Activated T-helper 1 cell treated with anti-CD3 and anti-CD28 coated beads, Interleukin-12 subunit alpha, Interleukin-12 subunit beta, Interleukin-2, Interleukin-4 antibody, amounts not matched to agents 30 ng/mL and 10 ng/mL and 1 ng/mL, durations not matched to agents 14 hours and 24 hours and 36 hours (primary cell): ENCODE measurements at regions of chr12 and their contacts with region 1.

Region 1: DNA sequence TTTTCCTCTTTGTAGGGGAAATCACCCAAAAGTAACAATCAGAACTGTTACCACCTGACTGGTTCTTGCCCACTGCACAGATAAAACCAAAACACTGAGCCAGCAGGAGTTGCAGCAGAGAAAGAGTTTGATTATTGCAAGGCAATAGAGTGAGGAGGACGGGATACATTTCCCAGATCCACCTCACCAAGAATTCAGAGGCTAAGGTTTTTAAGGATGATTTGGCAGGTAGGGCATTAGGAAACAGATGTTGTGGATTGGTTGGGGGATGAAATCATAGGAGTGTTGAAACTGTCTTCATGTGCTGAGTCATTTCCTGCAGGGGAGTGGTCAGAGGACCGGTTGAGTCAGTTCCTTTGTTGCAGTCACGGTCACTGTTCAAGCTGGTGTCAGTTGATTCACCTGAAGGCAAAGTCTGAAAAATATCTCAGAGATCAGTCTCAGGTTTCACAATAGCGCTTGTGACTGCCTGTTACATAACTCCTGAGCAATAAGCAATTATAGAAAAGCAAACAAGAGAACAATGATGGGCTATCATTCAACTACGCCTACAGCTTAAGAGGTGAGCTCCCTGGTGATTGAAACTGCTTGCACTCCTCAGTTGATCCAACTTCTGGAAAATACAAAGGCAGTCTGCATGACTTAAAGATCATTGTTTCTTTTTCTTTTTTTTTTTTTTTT is 20.3 kb upstream of the AMN1 start:
- DNase-seq: peak; percentile 71
- H3K4me3 Mint-ChIP-seq: no peak overlapping the region
- H3K27ac Mint-ChIP-seq: peak overlapping the region; percentile 27
- H3K4me1 Mint-ChIP-seq: peaks cover 53% of the 10 kb centered on the region
- H3K27me3 Mint-ChIP-seq: no peaks in the 10 kb centered on the region

Region 2: GRCh38 chr12:31317471-31318395 is 431.4 kb before region 1 on chr12:
- intact Hi-C with region 1: loop called (anchors 2 kb)
- DNase-seq: no peak
- H3K4me3 Mint-ChIP-seq: peak overlapping the region; percentile 97
- H3K27ac Mint-ChIP-seq: peak overlapping the region; percentile 90
- H3K4me1 Mint-ChIP-seq: peaks cover 84% of the 10 kb centered on the region
- H3K27me3 Mint-ChIP-seq: no peaks in the 10 kb centered on the region

Region 3: GRCh38 chr12:31589904-31590641 is 159.1 kb before region 1 on chr12:
- intact Hi-C with region 1: no loop called
- DNase-seq: no peak
- H3K4me3 Mint-ChIP-seq: peak overlapping the region; percentile 73
- H3K27ac Mint-ChIP-seq: peak overlapping the region; percentile 29
- H3K4me1 Mint-ChIP-seq: peaks cover 13% of the 10 kb centered on the region
- H3K27me3 Mint-ChIP-seq: peaks cover 54% of the 10 kb centered on the region

Region 4: GRCh38 chr12:31682136-31682962 is 66.8 kb before region 1 on chr12:
- intact Hi-C with region 1: loop called (anchors 2 kb)
- DNase-seq: peak; percentile 62
- H3K4me3 Mint-ChIP-seq: no peak overlapping the region
- H3K27ac Mint-ChIP-seq: peak overlapping the region; percentile 50
- H3K4me1 Mint-ChIP-seq: peaks cover 12% of the 10 kb centered on the region
- H3K27me3 Mint-ChIP-seq: no peaks in the 10 kb centered on the region

Region 5: DNA sequence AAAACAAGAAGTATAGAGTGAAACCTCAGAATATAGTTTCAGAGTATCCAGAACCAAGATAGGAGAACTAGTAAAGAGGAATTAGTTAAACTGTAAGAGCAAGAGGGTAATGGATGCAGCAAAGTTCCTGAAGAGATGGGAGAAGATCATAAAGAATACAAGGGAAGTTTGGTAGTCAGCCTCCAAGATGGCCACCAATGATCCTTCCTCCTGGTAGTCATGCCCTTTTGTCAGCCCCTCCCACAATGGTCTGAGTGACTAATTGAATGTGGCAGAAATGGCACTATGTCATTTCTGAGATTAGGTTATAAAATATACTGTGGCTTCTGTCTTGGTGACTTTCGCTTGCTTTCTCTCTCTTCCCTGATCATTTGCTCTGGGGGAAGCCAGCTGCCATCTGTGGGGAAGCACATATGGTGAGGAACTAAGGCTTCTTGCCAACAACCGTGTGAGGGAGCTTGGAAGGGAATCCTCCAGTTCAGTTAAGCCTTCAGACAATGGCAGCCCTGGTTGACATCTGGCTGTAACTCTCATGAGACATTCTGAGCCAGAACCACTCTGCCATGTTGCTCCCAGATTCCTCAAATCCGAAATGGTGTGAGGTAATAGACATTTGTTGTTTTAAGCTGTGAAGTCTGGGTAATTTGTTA is 35.0 kb after region 1 on chr12:
- intact Hi-C with region 1: no loop called
- DNase-seq: no peak
- H3K4me3 Mint-ChIP-seq: no peak overlapping the region
- H3K27ac Mint-ChIP-seq: no peak overlapping the region
- H3K4me1 Mint-ChIP-seq: no peaks in the 10 kb centered on the region
- H3K27me3 Mint-ChIP-seq: no peaks in the 10 kb centered on the region

Region 6: DNA sequence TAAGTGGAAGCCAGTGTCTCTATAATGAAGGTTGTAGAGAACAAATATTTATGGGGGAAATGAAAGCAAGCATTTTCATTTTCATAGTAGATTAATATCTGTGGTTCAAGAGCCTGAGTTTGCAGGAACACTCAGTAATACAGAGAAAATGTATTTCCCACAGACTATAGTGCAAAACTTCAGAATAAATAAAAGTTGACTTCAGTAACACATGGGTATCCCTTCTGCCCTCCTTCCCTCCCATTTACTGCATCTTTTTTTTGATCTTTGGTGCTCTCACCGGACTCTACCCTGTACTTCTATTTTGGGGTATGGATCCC is 55.0 kb after region 1 on chr12:
- intact Hi-C with region 1: loop called (anchors 1 kb)
- DNase-seq: no peak
- H3K4me3 Mint-ChIP-seq: peak overlapping the region; percentile 31
- H3K27ac Mint-ChIP-seq: peak overlapping the region; percentile 14
- H3K4me1 Mint-ChIP-seq: peaks cover 40% of the 10 kb centered on the region
- H3K27me3 Mint-ChIP-seq: no peaks in the 10 kb centered on the region

Region 7: DNA sequence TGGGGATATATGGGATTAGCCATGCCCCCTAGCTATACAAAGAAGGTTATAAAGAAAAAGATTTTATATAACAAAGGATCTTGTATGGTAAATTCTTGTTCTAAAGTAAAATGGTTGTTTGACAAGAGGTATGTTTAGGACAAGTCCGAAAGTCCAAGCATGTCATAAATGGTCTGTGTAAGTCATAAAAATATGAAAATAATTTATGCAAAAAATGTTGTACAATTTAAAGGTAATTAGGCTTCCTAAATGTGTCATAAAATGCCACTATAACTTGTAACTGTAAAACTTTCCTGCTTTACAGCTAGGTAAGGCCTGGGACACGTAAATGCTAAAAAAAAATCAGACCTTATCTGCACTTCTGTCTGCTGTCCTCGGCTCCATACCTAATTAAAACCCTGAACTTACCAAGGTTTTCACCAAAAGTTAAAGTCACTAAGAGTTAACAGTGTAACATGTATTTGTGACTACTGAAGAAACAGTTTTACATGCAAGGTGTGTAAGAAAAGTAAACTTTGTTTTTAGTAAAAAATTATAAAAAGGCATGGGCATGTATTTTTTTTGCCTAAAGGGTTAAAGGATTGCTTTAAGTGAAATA is 100.0 kb after region 1 on chr12:
- intact Hi-C with region 1: no loop called
- DNase-seq: no peak
- H3K4me3 Mint-ChIP-seq: no peak overlapping the region
- H3K27ac Mint-ChIP-seq: no peak overlapping the region
- H3K4me1 Mint-ChIP-seq: no peaks in the 10 kb centered on the region
- H3K27me3 Mint-ChIP-seq: no peaks in the 10 kb centered on the region

Region 8: DNA sequence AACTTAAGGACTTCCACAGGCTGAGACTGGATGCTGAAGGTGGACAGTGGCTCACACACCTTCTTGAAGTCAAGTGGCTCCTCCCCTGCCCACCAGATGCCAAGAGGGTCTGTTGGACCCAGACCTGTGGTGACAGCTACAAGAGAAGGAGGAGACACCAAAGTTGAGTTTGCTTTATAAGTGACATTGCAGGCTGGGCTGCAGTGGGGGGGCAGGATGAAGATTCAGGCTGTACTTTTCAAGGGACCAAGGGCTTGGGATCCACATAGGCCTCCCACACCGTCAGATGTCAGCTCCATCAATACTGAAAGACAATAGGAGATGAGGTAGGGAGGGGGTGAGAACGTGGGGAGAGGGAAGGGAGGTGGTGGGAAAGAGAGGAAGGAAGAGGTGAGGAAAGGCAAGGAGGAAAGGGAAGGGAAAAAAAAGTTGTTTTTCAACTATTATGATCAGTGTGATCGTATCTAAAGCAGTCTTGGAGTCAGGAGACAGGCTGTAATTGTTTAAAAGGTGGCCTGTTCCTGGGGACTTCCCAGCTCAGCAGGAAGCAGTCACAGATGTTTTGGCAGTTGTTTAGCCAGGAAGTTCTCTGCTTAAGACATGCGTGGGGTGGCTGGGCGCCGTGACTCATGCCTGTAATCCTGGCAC is 125.9 kb after region 1 on chr12:
- intact Hi-C with region 1: loop called (anchors 1 kb)
- DNase-seq: peak; percentile 68
- H3K4me3 Mint-ChIP-seq: peak overlapping the region; percentile 80
- H3K27ac Mint-ChIP-seq: peak overlapping the region; percentile 100
- H3K4me1 Mint-ChIP-seq: peaks cover 30% of the 10 kb centered on the region
- H3K27me3 Mint-ChIP-seq: no peaks in the 10 kb centered on the region

Region 9: DNA sequence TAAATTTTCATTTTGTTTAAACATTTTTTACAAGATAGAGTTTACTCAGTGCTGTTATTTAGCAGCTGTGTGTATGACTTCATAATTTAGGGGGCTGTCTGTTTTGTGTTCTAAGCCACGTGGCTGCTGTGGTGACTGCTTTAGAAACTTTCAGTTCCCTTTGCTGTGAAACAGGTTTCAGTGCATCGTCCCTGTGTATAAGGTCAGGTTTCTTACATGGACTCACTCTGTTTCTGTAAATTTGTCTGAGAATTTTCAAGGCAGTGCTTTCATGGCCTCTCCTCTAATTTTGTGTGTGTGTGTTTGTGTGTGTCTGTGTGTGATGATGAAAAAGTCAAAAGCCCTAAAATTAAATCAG is 389.9 kb after region 1 on chr12:
- intact Hi-C with region 1: loop called (anchors 5 kb)
- DNase-seq: peak; percentile 20
- H3K4me3 Mint-ChIP-seq: peak overlapping the region; percentile 70
- H3K27ac Mint-ChIP-seq: peak overlapping the region; percentile 4
- H3K4me1 Mint-ChIP-seq: peaks cover 39% of the 10 kb centered on the region
- H3K27me3 Mint-ChIP-seq: peaks cover 11% of the 10 kb centered on the region